ENCODE measurements at regions of chr1 and their contacts with region 1.

Region 1: GRCh38 chr1:150829743-150830142 is 21.7 kb upstream of the CTSK start:
- DNase-seq: no peak
- ATAC-seq: no peak
- H3K4me3 ChIP-seq: no peak overlapping the region
- H3K27ac ChIP-seq: no peak overlapping the region
- H3K4me1 ChIP-seq: no peaks in the 10 kb centered on the region
- H3K27me3 ChIP-seq: no peaks in the 10 kb centered on the region
- CTCF ChIP-seq: peak; percentile 52

Region 2: GRCh38 chr1:151085953-151086559 is 256.3 kb after region 1 on chr1:
- CTCF ChIA-PET with region 1: no interaction called
- POLR2A ChIA-PET with region 1: no interaction called
- in situ Hi-C with region 1: no loop called
- intact Hi-C with region 1: no loop called
- DNase-seq: no peak
- ATAC-seq: no peak
- H3K4me3 ChIP-seq: no peak overlapping the region
- H3K27ac ChIP-seq: no peak overlapping the region
- H3K4me1 ChIP-seq: no peaks in the 10 kb centered on the region
- H3K27me3 ChIP-seq: no peaks in the 10 kb centered on the region
- CTCF ChIP-seq: no peak

Region 3: GRCh38 chr1:151146412-151147140 is 316.8 kb after region 1 on chr1 and contains the start of gene SEMA6C:
- CTCF ChIA-PET with region 1: interaction called, 10 read pairs
- POLR2A ChIA-PET with region 1: no interaction called
- in situ Hi-C with region 1: no loop called
- intact Hi-C with region 1: no loop called
- DNase-seq: no peak
- ATAC-seq: peak; percentile 99
- H3K4me3 ChIP-seq: peak within 1 kb of the TSS; percentile 69 to 82
- H3K27ac ChIP-seq: peak within 1 kb of the TSS; percentile 71
- H3K4me1 ChIP-seq: peaks cover 7% of the 10 kb centered on the region; the same call in 1 of the 2 replicates
- H3K27me3 ChIP-seq: no peaks in the 10 kb centered on the region
- CTCF ChIP-seq: no peak
- total RNA-seq, gene SEMA6C: 5.7 TPM

Region 4: DNA sequence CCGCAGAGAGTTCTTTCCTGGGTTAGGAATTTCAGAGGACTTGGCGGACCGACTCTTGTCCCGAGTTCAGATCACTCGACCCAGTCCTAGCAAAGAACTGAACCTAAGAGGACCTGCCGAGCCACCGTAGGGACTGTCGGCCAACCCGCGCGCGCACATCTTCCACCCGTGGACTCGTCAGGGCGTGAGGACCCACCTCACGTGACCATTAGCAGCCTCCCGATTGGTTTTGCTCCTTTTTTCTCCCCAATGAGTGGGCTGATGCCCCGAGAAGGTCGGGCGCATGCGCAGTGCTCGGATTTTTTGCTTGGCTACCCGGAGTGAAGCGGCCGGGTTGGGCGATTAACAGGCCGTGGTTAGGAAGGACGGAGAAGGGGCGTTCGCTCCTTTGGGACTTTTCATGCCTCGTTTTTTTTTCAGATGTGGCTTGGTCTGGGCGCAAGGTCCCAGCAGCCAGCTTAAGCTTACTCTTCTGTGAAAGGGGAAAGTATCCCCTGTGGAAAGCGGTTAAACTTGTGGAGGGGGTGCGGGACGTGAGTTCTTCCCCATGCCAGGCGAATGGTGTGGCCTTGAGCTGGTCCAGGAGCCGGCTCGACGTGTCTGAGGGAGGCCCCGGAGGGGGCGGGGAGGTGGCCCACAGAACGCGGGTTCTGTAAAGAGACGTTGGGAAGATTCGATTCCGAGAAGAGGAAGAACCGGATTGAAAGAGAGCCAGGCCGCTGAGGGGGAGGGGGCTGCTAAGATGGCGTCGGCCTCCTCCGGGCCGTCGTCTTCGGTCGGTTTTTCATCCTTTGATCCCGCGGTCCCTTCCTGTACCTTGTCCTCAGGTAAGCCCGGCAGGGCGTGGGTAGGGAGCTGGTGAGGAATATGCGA is 368.7 kb after region 1 on chr1 and contains the start of gene PIP5K1A:
- CTCF ChIA-PET with region 1: no interaction called
- POLR2A ChIA-PET with region 1: no interaction called
- in situ Hi-C with region 1: no loop called
- intact Hi-C with region 1: no loop called
- DNase-seq: peak; percentile 92
- ATAC-seq: peak; percentile 81
- H3K4me3 ChIP-seq: peak within 1 kb of the TSS; percentile 94 to 100
- H3K27ac ChIP-seq: peak within 1 kb of the TSS; percentile 97
- H3K4me1 ChIP-seq: peaks cover 12% of the 10 kb centered on the region; the same call in 1 of the 2 replicates
- H3K27me3 ChIP-seq: no peaks in the 10 kb centered on the region
- CTCF ChIP-seq: no peak
- total RNA-seq, gene PIP5K1A: 78.9 TPM